GM18951 (cell line): ENCODE measurements at regions of chr5 and their contacts with region 1.

Region 1: GRCh38 chr5:40688127-40688761 is 8.5 kb downstream of the PTGER4 start:
- POLR2A ChIP-seq: no peak

Region 2: DNA sequence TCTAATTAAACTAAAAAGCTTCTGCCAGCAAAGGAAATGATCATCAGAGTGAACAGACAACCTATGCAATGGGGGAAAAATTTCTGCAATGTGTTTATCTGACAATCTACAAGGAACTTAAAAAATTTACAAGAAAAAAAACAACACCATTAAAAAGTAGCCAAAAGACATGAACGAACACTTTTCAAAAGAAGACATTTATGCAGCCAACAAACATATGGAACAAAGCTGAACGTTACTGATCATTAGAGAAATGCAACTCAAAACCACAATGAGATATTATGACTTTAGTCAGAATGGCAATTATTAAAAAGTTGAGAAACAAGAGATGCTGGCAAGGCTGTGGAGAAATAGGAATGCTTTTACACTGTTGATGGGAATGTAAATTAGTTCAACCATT is 733.1 kb before region 1 on chr5:
- in situ Hi-C with region 1: loop called (anchors 10 kb)
- POLR2A ChIP-seq: no peak